ENCODE measurements at regions of chr4 and their contacts with region 1.

Region 1: DNA sequence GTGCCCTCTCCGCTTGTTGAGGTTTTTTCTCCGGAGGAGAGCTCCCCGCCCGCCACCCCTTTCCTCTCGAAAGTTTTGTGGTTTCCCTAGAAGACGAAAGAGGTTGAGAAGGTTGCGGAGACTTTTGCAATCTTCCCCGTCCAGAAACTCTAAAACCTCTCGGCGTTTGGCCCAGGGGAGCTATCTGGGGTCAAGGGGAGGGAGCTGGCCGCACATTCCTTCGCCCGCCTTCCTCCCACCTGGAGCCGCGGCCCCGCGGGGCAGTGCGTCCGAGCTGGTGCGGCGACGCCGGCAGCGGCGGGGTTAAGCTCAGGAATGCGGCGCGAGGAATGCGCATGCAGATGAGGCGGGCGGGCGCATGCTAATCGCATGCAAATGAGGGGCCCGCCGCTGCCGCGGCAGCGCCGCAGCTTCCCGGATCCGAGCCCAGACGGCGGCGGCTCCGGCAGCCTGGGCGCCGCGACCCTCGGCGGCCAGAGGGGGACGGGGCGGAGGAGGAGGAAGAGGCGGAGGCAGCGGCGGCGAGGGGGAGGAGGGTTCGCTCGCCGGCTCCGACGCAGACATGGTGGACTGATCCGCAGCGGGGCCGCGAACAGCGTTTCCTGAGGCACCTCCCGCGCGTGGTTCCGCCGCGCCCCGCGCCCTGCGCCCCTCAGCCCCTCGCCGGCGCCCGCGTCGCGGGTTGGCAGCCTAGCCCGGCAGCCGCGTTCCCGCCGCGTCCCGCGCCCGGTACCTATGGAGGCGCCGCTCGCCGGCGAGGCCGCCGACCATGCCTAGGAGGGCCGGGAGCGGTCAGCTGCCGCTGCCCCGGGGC is at the start of gene WWC2:
- DNase-seq: peak; percentile 85
- H3K4me3 Mint-ChIP-seq: peak within 1 kb of the TSS; percentile 70
- H3K27ac Mint-ChIP-seq: no peak within 1 kb of the TSS
- H3K4me1 Mint-ChIP-seq: peaks cover 26% of the 10 kb centered on the region
- H3K27me3 Mint-ChIP-seq: no peaks in the 10 kb centered on the region
- CTCF ChIP-seq: no peak
- total RNA-seq, gene WWC2: 38.7 and 39.0 TPM in 2 replicates

Region 2: GRCh38 chr4:183030309-183030708 is 68.6 kb before region 1 on chr4:
- CTCF ChIA-PET with region 1: no interaction called
- intact Hi-C with region 1: no loop called
- DNase-seq: no peak
- H3K4me3 Mint-ChIP-seq: no peak overlapping the region
- H3K27ac Mint-ChIP-seq: no peak overlapping the region
- H3K4me1 Mint-ChIP-seq: no peaks in the 10 kb centered on the region
- H3K27me3 Mint-ChIP-seq: peaks cover 13% of the 10 kb centered on the region
- CTCF ChIP-seq: no peak

Region 3: DNA sequence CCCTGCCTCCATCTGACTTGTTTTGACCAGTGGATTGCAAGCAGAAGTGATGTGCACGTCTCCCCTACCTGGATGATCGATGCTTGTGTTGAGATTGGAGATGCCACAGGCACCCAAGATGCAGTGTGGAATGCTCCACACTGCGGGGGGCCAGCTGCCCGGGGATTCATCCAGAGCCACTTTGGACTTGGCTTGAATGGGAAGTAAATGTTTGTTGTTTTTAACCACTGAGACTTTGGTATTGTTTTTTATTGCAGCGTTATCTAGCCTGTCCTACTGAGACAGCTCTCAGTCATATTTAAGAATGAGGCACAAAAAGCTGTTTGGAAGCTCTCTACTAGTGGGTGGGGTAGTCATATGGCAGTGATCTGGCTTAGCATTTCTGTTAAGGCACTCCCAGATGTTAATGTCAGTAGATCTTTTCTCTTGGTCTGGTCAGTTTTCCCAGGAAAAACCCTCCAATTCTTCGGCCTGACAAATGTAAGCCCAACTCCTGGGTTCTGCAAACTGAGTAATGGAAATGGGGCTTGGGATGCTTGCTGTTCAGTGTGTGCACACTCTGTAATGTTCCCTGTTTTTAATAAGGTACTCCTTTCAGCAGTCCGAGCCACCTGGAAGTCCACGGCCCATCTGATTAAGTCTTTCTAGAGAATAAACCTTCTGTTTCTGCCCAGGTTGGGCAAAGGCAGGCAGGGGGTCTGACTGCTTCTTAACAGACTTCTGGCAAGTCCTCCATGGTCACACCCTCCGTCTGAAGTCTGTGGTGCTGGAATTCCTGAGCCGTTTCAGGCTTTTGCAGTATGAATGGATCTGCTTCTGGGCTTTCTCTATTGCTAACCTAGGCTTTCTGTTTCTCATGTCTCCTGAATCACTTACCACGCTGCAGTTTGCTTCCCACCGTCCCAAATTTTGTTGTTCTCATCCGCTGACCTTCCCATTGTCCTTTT is 74.9 kb after region 1 on chr4:
- CTCF ChIA-PET with region 1: no interaction called
- intact Hi-C with region 1: loop called (anchors 5 kb)
- DNase-seq: no peak
- H3K4me3 Mint-ChIP-seq: peak overlapping the region; percentile 68
- H3K27ac Mint-ChIP-seq: peak overlapping the region; percentile 83
- H3K4me1 Mint-ChIP-seq: peaks cover 53% of the 10 kb centered on the region
- H3K27me3 Mint-ChIP-seq: no peaks in the 10 kb centered on the region
- CTCF ChIP-seq: no peak